ENCODE measurements at regions of chr7 and their contacts with region 1.

Region 1: GRCh38 chr7:33904681-33905388 is 504 bp upstream of the BMPER start:
- DNase-seq: peak; percentile 86
- H3K4me3 ChIP-seq: peak overlapping the region; percentile 91
- H3K27ac ChIP-seq: peak overlapping the region; percentile 79
- H3K4me1 ChIP-seq: peaks cover 69% of the 10 kb centered on the region
- H3K27me3 ChIP-seq: no peaks in the 10 kb centered on the region

Region 2: DNA sequence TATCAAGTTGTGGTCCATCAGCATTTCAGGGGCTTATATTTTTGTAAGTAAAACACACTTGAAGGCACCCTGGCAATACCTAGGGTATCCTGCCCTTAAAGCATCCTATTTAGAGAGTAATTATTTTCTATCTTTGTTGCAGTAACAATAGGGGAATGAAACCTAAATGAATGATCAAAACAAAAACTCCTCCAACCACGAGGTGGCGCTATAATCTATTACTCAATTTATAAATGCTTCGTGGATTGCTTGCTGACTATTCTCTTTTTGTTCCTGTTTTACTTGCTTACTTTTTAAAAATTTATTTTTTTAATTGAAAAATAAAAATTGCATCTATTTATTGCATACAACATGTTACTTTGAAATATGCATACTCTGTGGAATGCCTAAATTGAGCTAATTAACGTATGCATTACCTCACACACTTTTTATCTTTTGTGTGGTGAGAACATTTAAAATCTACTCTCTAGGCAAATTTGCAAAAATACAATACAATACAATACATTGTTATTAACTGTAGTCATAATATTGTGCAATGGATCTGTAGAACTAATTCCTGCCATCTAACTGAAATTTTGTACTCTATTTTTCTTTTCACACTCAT is 147.2 kb before region 1 on chr7:
- in situ Hi-C with region 1: loop called (anchors 10 kb)
- DNase-seq: peak; percentile 65
- H3K4me3 ChIP-seq: peak overlapping the region; percentile 14; the same call in 1 of the 2 replicates
- H3K27ac ChIP-seq: peak overlapping the region; percentile 77
- H3K4me1 ChIP-seq: peaks cover 27% of the 10 kb centered on the region
- H3K27me3 ChIP-seq: no peaks in the 10 kb centered on the region

Region 3: DNA sequence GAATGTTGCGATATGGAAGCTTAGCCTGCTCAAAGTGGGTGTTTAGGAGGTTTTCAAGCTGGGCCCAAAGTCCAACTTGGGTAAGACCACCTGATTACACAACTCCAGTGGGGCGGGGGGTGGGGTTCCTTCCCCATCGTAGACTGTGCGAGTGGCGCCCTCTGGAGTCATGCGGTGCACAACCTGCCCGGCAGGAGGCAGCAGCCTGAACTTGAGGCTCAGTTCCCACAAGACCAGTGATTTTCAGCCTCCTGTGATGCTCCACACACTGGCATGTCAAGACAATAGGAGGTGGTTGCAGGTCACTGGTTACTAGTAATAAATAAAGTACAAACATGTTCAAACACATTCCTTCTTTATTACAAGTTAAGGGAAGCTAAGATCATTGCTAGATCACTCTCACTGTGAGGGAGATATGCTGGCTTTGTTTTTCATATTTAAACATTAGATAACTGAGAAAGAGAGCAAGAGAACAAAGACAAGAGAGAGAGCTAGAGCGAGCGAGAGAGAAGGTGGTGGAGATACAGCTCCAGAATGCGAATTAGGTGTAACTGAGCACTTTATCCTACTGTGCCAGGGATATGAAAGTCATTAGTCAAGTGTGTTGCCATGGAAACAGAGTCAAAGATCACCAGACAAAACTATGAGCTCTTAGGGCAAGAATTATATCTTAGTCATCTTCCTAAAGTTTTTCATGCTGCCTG is 96.9 kb before region 1 on chr7:
- in situ Hi-C with region 1: no loop called
- DNase-seq: peak; percentile 97
- H3K4me3 ChIP-seq: no peak overlapping the region
- H3K27ac ChIP-seq: peak overlapping the region; percentile 95
- H3K4me1 ChIP-seq: peaks cover 42% of the 10 kb centered on the region
- H3K27me3 ChIP-seq: no peaks in the 10 kb centered on the region